BJ (cell line): ENCODE measurements at regions of chr1 and their contacts with region 1.

Region 1: DNA sequence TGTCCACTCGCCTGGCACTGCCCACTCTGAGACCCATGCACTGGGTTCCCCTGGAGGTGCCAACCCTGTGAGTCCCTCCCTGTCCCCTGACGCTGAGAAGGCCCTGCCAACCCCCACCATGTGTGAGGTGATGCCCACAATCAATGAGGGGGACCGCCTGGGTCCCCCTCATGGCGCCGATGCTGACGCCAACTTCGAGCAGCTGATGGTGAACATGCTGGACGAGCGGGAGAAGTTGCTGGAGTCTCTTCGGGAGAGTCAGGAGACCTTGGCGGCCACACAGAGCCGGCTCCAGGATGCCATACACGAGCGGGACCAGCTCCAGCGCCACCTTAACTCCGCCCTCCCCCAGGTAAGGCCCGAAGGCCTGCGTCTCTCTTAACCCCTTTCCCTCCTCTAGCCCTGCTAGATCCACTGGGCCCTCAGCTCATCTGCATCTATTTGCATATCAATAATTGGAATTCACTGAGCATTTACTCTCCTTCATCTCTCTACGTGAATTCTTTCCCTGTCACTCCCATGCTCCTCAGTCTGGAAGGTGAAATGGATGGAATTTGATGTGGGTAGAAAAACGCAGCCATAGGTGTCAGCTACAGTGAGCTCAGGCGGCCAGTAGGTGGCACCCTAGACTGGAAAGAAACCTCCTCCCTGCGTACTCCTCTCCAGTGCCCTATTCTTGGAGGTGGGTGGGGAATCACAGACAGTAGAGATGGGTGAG is 12.8 kb downstream of the PPFIA4 start:
- DNase-seq: no peak
- H3K4me3 ChIP-seq: no peak overlapping the region
- H3K27me3 ChIP-seq: no peaks in the 10 kb centered on the region
- CTCF ChIP-seq: peak; percentile 91

Region 2: GRCh38 chr1:203026031-203026989 is 12.7 kb before region 1 on chr1 and contains the start of gene PPFIA4:
- CTCF ChIA-PET with region 1: interaction called, 61 read pairs
- POLR2A ChIA-PET with region 1: no interaction called
- DNase-seq: no peak
- H3K4me3 ChIP-seq: peak within 1 kb of the TSS; percentile 65
- H3K27me3 ChIP-seq: peaks cover 1% of the 10 kb centered on the region
- CTCF ChIP-seq: no peak
- polyA plus RNA-seq, gene PPFIA4: 2.0 and 3.8 TPM in 2 replicates

Region 3: DNA sequence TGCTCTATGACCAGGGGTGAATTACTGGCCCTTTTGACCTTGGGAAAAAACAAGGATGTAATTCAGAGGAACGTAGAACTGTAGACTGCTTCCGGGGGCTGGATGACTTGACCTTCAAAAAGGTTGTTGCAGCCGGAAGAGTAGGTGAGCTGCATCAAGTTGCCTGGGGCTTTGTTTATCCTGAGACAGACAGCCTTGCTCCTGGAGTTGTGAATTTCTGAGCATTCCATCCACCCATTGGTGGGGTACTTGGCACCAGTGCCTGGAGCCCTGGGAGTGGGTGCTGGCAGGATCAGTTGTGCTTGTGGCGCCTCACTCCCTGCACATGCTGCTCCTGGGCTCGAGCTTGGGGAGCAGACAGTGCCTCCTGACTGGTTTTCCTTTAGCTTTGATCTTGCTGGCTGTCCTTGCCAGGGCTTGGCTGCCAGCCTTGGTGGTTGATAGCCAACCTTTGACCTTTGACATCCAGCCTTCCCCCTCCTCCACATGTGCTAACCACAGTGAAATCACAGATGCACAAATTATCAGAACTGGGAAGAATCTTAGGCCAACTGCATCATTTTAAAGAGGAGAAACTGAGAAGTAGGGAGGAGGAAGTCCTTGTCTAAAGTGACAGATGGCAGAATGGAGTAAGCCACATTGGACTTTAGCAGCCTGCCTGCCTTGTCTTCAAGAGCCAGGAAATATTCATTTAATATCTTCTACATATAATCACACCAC is 63.0 kb after region 1 on chr1:
- CTCF ChIA-PET with region 1: interaction called, 16 read pairs
- POLR2A ChIA-PET with region 1: no interaction called
- DNase-seq: no peak
- H3K4me3 ChIP-seq: no peak overlapping the region
- H3K27me3 ChIP-seq: peaks cover 17% of the 10 kb centered on the region
- CTCF ChIP-seq: no peak

Region 4: GRCh38 chr1:203117611-203118575 is 78.8 kb after region 1 on chr1:
- CTCF ChIA-PET with region 1: interaction called, 92 read pairs
- POLR2A ChIA-PET with region 1: no interaction called
- DNase-seq: no peak
- H3K4me3 ChIP-seq: no peak overlapping the region
- H3K27me3 ChIP-seq: peaks cover 38% of the 10 kb centered on the region
- CTCF ChIP-seq: peak; percentile 88

Region 5: GRCh38 chr1:203202431-203203245 is 163.6 kb after region 1 on chr1:
- CTCF ChIA-PET with region 1: interaction called, 16 read pairs
- POLR2A ChIA-PET with region 1: no interaction called
- DNase-seq: peak; percentile 69
- H3K4me3 ChIP-seq: no peak overlapping the region
- H3K27me3 ChIP-seq: no peaks in the 10 kb centered on the region
- CTCF ChIP-seq: no peak